Ascending aorta (tissue), 2 donors: ENCODE measurements at regions of chr4 and their contacts with region 1.

Region 1: GRCh38 chr4:38856524-38857337 is at the start of gene TLR6:
- DNase-seq: peak in 1 of 2 donors; percentile 69
- H3K4me3 ChIP-seq: peak within 1 kb of the TSS; percentile 41 to 59
- H3K27ac ChIP-seq: peak within 1 kb of the TSS; percentile 9 to 50
- H3K4me1 ChIP-seq: no peaks in the 10 kb centered on the region
- H3K27me3 ChIP-seq: no peaks in the 10 kb centered on the region
- CTCF ChIP-seq: peak; percentile 41 to 71 (median 61)
- total RNA-seq, gene TLR6: 0.11 TPM

Region 2: DNA sequence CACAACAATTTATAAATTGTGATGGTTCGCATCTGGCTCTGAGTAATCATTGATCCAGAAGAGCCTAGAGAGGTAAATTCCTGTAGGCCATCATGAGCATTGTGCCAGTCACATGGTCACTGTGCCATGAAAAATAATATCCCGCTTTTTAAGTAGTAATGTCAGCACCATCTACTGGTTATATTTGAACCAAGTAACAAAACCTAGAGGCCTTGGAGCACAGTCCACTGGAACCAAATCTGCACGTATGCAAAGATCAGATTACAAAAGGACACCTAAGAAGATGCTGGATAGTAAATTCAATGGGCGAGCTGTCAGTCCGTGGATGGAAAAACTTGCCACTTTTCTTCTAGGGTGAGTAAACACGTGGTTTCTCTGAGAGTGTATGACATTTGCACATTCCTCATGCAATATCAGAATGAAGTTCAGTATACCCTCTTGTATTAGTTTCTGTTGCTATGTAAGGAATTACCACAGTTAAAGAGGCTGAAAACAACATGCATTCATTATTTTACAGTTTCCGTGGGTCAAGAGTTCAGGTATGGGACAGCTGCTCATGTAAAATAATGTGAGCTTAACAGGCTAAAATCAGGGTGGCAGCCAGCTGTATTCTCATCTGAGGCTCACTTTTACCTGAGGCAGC is 37.7 kb after region 1 on chr4:
- intact Hi-C with region 1: loop called (anchors 5 kb)
- DNase-seq: no peak
- H3K4me3 ChIP-seq: no peak overlapping the region
- H3K27ac ChIP-seq: no peak overlapping the region
- H3K4me1 ChIP-seq: peaks cover 0 to 7% of the 10 kb centered on the region in 2 donors
- H3K27me3 ChIP-seq: no peaks in the 10 kb centered on the region
- CTCF ChIP-seq: peak in 1 of 3 experiments; percentile 19